Activated CD4-positive, alpha-beta T cell treated with anti-CD3 and anti-CD28 coated beads, Interleukin-2, amount 10 ng/mL, durations not matched to agents 24 days and 14 days (primary cell): ENCODE measurements at regions of chr11 and their contacts with region 1.

Region 1: GRCh38 chr11:9384535-9385303 is at the start of gene IPO7:
- DNase-seq: peak; percentile 97
- H3K4me3 Mint-ChIP-seq: peak within 1 kb of the TSS; percentile 95
- H3K27ac Mint-ChIP-seq: peak within 1 kb of the TSS; percentile 94
- H3K4me1 Mint-ChIP-seq: peaks cover 21% of the 10 kb centered on the region
- H3K27me3 Mint-ChIP-seq: no peaks in the 10 kb centered on the region
- total RNA-seq, gene IPO7: 177 and 200 TPM in 2 replicates

Region 2: DNA sequence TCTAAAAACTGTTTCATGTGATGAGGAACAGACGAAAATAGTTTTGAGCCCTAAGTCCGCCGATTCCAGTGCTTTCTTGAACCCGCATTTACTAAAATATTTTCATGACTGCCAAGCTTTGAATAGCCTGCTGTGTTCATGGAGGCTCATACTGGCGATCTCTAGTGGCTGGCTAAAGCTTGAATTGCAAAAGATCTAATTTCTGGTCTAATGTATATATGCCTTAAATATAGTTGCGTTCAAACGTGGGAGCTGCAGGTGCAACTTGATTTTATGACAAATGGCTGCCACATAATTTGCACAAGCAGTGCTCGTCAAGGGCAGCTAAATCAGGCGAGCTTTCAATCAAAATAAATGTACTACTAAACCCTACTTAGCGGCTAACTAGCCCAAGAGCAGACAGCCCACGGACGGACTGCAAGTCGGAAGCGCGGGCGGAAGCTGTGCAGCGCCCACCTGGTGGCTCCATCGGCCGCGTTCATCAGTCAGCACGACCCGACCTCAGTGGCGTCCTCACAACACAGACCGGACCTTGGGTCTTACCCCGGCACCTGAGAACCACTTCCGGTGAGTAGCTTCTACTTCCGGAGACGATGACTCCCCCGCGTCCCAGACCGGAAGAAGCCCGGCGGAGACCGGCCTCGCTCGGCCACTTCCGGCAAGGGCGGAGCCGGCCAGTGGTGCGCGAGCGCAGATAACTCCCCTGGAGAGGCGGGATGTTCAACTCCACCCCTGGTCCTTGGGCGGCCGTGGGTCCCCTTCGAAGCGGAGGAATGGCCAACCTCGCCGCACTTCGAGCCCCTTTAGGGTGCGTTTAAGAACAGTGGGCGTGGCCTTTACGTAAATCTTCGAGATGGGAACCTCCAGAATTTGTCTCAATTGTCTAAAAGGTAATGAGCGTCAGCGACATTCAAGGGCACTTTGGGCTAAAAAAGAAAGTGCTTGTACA is 696.0 kb before region 1 on chr11:
- intact Hi-C with region 1: loop called (anchors 10 kb)
- DNase-seq: peak; percentile 96
- H3K4me3 Mint-ChIP-seq: peak overlapping the region; percentile 94
- H3K27ac Mint-ChIP-seq: peak overlapping the region; percentile 88
- H3K4me1 Mint-ChIP-seq: peaks cover 43% of the 10 kb centered on the region
- H3K27me3 Mint-ChIP-seq: no peaks in the 10 kb centered on the region

Region 3: DNA sequence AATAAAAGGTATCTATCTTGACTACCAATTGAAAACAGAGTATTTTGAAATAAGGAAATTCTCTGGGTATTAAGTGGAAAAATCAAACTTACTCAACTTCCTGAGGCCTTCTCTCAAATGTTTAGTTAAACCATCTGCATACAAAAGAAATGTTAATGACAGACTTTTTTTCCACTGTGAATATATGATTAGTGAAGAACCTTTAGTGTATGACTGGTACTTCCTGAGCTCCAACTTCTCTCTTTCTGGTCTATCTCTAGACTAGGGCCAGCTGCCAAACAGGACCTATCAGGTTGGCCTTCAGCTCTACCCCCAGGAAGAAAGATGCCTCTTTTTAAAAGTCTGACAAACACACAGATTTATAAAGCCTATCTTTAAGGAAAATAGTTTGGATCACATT is 224.6 kb before region 1 on chr11:
- intact Hi-C with region 1: loop called (anchors 10 kb)
- DNase-seq: no peak
- H3K4me3 Mint-ChIP-seq: no peak overlapping the region
- H3K27ac Mint-ChIP-seq: peak overlapping the region; percentile 61
- H3K4me1 Mint-ChIP-seq: peaks cover 16% of the 10 kb centered on the region
- H3K27me3 Mint-ChIP-seq: no peaks in the 10 kb centered on the region

Region 4: GRCh38 chr11:9314291-9315036 is 70.3 kb before region 1 on chr11 and contains the start of gene TMEM41B:
- intact Hi-C with region 1: loop called (anchors 1 kb)
- DNase-seq: peak; percentile 100
- H3K4me3 Mint-ChIP-seq: peak within 1 kb of the TSS; percentile 99
- H3K27ac Mint-ChIP-seq: peak within 1 kb of the TSS; percentile 97
- H3K4me1 Mint-ChIP-seq: peaks cover 38% of the 10 kb centered on the region
- H3K27me3 Mint-ChIP-seq: peaks cover 23% of the 10 kb centered on the region
- total RNA-seq, gene TMEM41B: 26.5 and 30.5 TPM in 2 replicates